ENCODE measurements at regions of chr9 and their contacts with region 1.

Region 1: GRCh38 chr9:128361986-128362646 is 9.1 kb upstream of the URM1 start:
- DNase-seq: peak; percentile 26 to 79 (median 67)
- ATAC-seq: peak; percentile 91
- H3K4me3 ChIP-seq: peak overlapping the region; percentile 47 to 65
- H3K4me3 Mint-ChIP-seq: peak overlapping the region; percentile 83
- H3K27ac ChIP-seq: peak overlapping the region in 1 of 2 experiments; percentile 23
- H3K27ac Mint-ChIP-seq: no peak overlapping the region
- H3K4me1 ChIP-seq: peaks cover 16% of the 10 kb centered on the region
- H3K4me1 Mint-ChIP-seq: peaks cover 10% of the 10 kb centered on the region
- H3K27me3 ChIP-seq: peaks cover 0 to 2% of the 10 kb centered on the region in 2 experiments
- H3K27me3 Mint-ChIP-seq: no peaks in the 10 kb centered on the region
- CTCF ChIP-seq: peak; percentile 88

Region 2: DNA sequence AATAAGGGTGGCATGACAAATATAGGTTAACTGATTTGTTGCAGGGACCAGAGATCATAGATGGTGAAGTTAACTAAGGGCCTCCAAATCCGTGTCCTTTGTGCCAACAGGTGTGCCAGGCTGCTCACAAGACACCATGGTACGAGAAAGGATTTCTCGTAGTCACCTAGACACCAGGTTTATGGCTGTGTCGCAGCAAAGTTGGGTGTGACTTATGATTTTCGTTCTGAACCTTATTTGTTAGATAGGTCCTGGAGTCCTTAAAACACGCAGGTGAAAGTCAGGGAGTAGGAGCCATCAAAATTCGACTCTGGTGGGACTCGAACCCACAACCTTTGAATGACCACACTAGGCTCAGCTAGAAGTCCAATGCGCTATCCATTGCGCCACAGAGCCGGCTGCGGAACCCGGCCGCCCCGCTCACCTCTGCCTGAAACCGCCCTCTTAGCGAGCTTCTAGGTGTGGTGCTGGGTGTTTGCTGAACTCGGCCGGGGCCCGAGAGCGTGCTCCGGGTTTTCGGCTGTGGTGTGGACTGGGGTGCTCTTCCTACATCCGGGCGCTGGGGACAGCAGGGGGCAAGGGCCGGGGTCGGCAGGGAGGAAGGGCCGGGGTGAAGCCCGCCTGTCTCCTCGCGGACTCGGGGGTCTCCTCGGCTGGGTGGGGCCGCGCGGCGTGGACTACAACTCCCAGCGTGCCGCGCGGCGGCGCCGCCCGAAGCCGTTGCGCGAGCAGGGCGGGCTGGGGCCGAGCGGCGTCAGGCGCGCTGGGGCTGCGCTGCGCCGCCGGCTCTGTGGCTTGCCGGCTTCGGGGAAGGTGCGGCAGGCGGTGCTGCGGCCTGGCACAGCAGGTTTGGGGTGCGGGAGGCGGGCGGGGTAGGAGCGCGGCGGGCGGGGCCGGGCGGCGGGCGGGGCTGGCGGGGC is 22.1 kb before region 1 on chr9 and contains the start of gene SLC27A4:
- CTCF ChIA-PET with region 1: interaction called, 16 read pairs
- POLR2A ChIA-PET with region 1: no interaction called
- intact Hi-C with region 1: loop called (anchors 1 to 2 kb)
- DNase-seq: peak; percentile 52 to 92 (median 76)
- ATAC-seq: peak; percentile 92
- H3K4me3 ChIP-seq: peak within 1 kb of the TSS; percentile 73 to 83
- H3K4me3 Mint-ChIP-seq: peak within 1 kb of the TSS; percentile 96
- H3K27ac ChIP-seq: peak within 1 kb of the TSS; percentile 40 to 53
- H3K27ac Mint-ChIP-seq: peak within 1 kb of the TSS; percentile 85
- H3K4me1 ChIP-seq: peaks cover 14% of the 10 kb centered on the region
- H3K4me1 Mint-ChIP-seq: peaks cover 8% of the 10 kb centered on the region
- H3K27me3 ChIP-seq: no peaks in the 10 kb centered on the region
- H3K27me3 Mint-ChIP-seq: no peaks in the 10 kb centered on the region
- CTCF ChIP-seq: no peak
- total RNA-seq, gene SLC27A4: 2.2 to 2.4 TPM

Region 3: GRCh38 chr9:128383007-128383753 is 21.1 kb after region 1 on chr9:
- CTCF ChIA-PET with region 1: interaction called, 14 read pairs
- POLR2A ChIA-PET with region 1: no interaction called
- intact Hi-C with region 1: no loop called
- DNase-seq: no peak
- ATAC-seq: no peak
- H3K4me3 ChIP-seq: no peak overlapping the region
- H3K4me3 Mint-ChIP-seq: no peak overlapping the region
- H3K27ac ChIP-seq: no peak overlapping the region
- H3K27ac Mint-ChIP-seq: no peak overlapping the region
- H3K4me1 ChIP-seq: no peaks in the 10 kb centered on the region
- H3K4me1 Mint-ChIP-seq: peaks cover 5% of the 10 kb centered on the region
- H3K27me3 ChIP-seq: no peaks in the 10 kb centered on the region
- H3K27me3 Mint-ChIP-seq: no peaks in the 10 kb centered on the region
- CTCF ChIP-seq: no peak

Region 4: DNA sequence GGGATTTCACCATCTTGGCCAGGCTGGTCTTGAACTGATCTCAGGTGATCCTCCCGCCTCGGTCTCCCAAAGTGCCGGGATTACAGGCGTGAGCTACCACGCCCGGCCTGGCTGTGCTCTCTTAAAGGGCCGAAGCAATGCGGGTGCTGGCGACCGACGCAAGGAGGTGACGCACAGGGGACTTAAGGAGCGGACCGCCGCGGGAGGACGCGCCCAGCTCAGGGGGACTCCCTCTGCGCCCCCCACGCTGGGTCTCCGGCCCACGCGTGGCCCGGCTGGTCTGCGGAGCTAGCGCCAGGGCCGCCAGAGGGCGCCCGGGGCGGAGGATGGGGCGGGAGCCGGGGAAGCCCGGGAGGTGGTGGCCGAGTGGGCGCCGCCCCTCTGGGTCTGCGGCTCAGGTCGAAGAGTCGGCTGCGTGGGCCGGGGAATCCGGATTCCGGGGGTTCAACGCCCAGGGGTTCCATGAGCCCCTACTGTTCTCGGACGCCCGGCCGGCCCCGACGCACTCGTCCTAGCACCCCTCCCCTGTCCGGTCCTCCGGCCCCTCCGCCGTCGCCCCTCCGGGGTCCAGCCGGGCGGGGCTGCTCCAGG is 58.0 kb after region 1 on chr9:
- CTCF ChIA-PET with region 1: interaction called, 7 read pairs
- POLR2A ChIA-PET with region 1: no interaction called
- intact Hi-C with region 1: loop called in 1 of 2 experiments (anchors 2 kb)
- DNase-seq: peak; percentile 24 to 84 (median 66)
- ATAC-seq: peak; percentile 76
- H3K4me3 ChIP-seq: peak overlapping the region; percentile 55 to 61
- H3K4me3 Mint-ChIP-seq: peak overlapping the region; percentile 78
- H3K27ac ChIP-seq: no peak overlapping the region
- H3K27ac Mint-ChIP-seq: no peak overlapping the region
- H3K4me1 ChIP-seq: peaks cover 14% of the 10 kb centered on the region
- H3K4me1 Mint-ChIP-seq: peaks cover 11% of the 10 kb centered on the region
- H3K27me3 ChIP-seq: peaks cover 0 to 10% of the 10 kb centered on the region in 2 experiments
- H3K27me3 Mint-ChIP-seq: peaks cover 23% of the 10 kb centered on the region
- CTCF ChIP-seq: peak; percentile 75

Measured in CD8-positive, alpha-beta T cell (primary cell).